Activated CD8-positive, alpha-beta memory T cell treated with anti-CD3 and anti-CD28 coated beads, Interleukin-2, amount 10 ng/mL, durations not matched to agents 7 days and 5 days (primary cell): ENCODE measurements at regions of chr1 and their contacts with region 1.

Region 1: GRCh38 chr1:32870615-32871363 is at the start of gene FNDC5:
- DNase-seq: peak; percentile 37
- ATAC-seq: peak; percentile 18
- H3K4me3 Mint-ChIP-seq: no peak within 1 kb of the TSS
- H3K27ac Mint-ChIP-seq: no peak within 1 kb of the TSS
- H3K4me1 Mint-ChIP-seq: peaks cover 10% of the 10 kb centered on the region
- H3K27me3 Mint-ChIP-seq: peaks cover 51% of the 10 kb centered on the region
- total RNA-seq, gene FNDC5: not detected

Region 2: DNA sequence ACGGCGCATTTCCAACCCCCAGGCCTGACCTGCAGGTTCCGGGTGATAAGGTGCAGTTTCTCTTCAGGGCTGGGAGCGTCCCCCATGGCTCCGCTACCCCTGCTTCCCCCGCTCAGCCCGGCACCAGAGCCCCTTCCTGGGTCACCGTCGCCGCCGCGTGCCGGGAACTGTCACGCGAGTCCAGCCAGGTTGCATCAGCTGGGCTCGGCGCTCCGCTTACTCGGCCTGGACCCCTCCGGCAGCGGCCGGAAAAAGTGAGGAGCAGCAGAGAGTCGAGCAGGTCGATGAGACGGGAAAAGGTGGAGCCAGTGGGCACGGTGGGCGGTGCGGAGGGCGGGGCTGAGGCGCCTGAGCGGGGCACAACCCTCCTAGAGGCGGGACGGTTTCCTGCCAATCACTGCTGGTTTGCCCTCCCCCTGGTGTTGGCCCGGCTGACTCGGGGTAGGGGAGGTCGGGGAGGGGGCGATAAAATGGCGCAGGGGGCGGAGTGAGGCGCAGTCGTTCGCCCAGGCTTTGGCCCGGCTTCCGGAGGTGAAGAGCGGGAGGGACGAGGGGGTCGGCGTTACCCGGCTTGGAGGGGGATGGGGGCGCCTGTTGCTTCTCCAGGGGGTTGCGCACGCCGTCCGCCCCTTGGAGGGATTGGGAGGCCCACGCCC is 53.5 kb before region 1 on chr1 and contains the starts of genes S100PBP and YARS1:
- CTCF ChIA-PET with region 1: interaction called, 16 read pairs
- DNase-seq: peak; percentile 100
- ATAC-seq: peak; percentile 94
- H3K4me3 Mint-ChIP-seq: peak within 1 kb of the TSS; percentile 95
- H3K27ac Mint-ChIP-seq: peak within 1 kb of the TSS; percentile 94
- H3K4me1 Mint-ChIP-seq: peaks cover 50% of the 10 kb centered on the region
- H3K27me3 Mint-ChIP-seq: no peaks in the 10 kb centered on the region
- total RNA-seq, gene S100PBP: 85.3 to 102 TPM
- total RNA-seq, gene YARS1: 192 to 238 TPM

Region 3: DNA sequence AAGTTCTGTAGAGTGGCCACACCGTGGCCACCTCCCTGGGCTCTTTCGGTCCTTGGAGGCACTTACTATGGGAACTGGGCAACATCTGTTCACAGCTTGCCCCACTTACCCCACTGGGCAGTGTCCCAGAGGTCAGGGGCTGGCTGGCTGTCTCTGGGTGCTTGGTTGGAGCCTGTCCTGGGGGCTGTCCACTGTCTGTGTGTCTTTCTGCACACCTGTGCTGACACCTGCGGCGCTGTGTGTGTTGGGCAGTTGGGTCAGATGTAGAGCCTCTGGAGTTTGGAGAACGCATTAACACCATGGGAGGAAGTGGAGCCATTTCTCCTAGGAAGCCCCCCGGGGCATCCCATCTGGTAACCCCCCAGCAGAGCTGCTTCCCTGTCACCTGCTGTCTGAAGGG is 31.8 kb after region 1 on chr1:
- CTCF ChIA-PET with region 1: no interaction called
- DNase-seq: no peak
- ATAC-seq: no peak
- H3K4me3 Mint-ChIP-seq: no peak overlapping the region
- H3K27ac Mint-ChIP-seq: no peak overlapping the region
- H3K4me1 Mint-ChIP-seq: peaks cover 8% of the 10 kb centered on the region
- H3K27me3 Mint-ChIP-seq: peaks cover 57% of the 10 kb centered on the region

Region 4: GRCh38 chr1:32928715-32929114 is 57.9 kb after region 1 on chr1:
- CTCF ChIA-PET with region 1: no interaction called
- DNase-seq: no peak
- ATAC-seq: no peak
- H3K4me3 Mint-ChIP-seq: no peak overlapping the region
- H3K27ac Mint-ChIP-seq: no peak overlapping the region
- H3K4me1 Mint-ChIP-seq: peaks cover 16% of the 10 kb centered on the region
- H3K27me3 Mint-ChIP-seq: peaks cover 44% of the 10 kb centered on the region

Region 5: GRCh38 chr1:32953495-32953894 is 82.7 kb after region 1 on chr1:
- CTCF ChIA-PET with region 1: no interaction called
- DNase-seq: no peak
- ATAC-seq: no peak
- H3K4me3 Mint-ChIP-seq: no peak overlapping the region
- H3K27ac Mint-ChIP-seq: peak overlapping the region; percentile 48
- H3K4me1 Mint-ChIP-seq: peaks cover 43% of the 10 kb centered on the region
- H3K27me3 Mint-ChIP-seq: no peaks in the 10 kb centered on the region

Region 6: DNA sequence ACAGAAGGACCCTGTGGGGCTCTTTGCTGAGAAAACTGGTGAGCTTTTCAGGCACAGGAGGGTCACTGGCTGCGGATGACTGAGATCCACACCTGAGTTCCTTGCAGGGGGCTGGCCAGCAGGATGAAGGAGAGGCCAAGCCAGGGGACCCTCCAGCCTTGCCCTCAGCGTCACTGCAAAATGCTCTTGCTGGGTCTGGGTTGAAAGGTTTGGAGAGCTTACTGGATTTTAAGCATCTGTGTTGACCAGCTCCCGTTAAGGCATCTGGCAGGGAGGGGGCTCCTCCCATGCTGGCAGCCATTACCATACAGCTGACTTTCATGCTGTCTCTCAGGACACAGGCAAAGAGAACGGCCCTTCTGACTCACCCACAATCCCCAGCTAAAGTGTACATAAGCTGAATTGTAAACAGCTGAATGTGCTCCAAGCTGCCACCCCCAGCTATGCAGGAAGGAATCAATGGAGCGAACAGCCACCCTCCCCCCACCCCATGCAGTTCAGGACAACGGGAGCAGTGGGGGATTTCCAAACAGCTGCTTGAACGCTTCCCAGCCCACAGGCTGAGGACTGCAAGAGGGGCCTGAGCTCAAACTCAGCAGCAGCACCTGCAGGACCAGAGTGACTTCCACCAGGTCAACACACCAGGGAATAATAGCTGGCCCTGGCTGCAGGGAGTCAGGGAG is 471.4 kb after region 1 on chr1:
- CTCF ChIA-PET with region 1: no interaction called
- DNase-seq: no peak
- ATAC-seq: no peak
- H3K4me3 Mint-ChIP-seq: no peak overlapping the region
- H3K27ac Mint-ChIP-seq: no peak overlapping the region
- H3K4me1 Mint-ChIP-seq: peaks cover 26% of the 10 kb centered on the region
- H3K27me3 Mint-ChIP-seq: no peaks in the 10 kb centered on the region